Naive thymus-derived CD8-positive, alpha-beta T cell (primary cell): ENCODE measurements at regions of chrX and their contacts with region 1.

Region 1: DNA sequence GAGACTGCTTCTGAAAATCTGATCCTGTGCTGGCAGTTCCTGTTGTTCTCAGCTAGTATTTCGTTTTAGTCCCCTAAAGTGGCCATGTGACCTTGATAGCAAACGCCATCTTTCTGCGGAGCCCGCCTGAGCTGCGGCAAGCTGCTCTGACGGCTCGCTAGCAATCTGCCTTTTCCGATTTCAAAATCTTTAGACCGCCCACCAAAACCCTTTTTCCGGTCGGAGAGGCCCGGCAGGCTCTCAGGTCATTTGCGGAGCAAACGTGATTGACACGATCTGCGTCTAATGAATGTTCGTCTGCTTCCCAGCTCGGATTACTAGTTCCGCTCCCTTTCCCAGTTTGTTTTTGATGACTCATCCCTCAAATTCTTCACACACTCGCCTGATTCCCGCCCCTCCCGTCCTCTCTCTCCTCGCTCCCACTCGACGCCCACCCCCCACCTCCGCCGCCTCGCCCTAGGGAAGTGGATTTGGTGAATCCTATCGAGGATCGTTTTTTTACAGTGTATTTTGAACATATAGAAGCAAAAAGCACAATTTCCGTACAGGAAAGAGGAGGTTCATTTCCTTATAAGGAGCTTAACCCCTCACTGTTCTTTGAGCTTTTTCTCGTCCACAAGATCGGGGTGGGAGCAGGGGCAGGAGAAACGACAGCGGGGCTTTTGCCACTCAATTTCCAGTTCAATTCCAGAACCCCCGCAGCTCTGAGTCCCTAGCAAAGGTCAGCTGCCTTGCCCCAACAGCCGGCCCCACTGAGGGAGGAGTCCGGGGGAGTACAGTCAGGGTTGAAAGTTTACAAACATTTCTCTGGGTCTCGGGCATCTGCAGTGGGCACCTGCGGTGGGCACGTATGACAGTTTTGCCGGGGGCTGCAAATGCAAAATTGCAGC is 37.5 kb downstream of the NLGN3 start:
- DNase-seq: peak; percentile 54 to 89 (median 80)
- ATAC-seq: peak; percentile 94 to 95
- H3K4me3 Mint-ChIP-seq: peak overlapping the region; percentile 88 to 98 (median 94)
- H3K27ac Mint-ChIP-seq: peak overlapping the region; percentile 90 to 100 (median 99)
- H3K4me1 Mint-ChIP-seq: peaks cover 0 to 21% (median 14%) of the 10 kb centered on the region in 4 donors
- H3K27me3 Mint-ChIP-seq: no peaks in the 10 kb centered on the region

Region 2: GRCh38 chrX:71118032-71118984 is 63.8 kb before region 1 on chrX and contains the start of gene MED12:
- POLR2A ChIA-PET with region 1: interaction called, 10 read pairs
- DNase-seq: peak; percentile 69 to 88 (median 78)
- ATAC-seq: peak; percentile 94 to 96
- H3K4me3 Mint-ChIP-seq: peak within 1 kb of the TSS; percentile 82 to 94 (median 87)
- H3K27ac Mint-ChIP-seq: peak within 1 kb of the TSS; percentile 88 to 97 (median 94)
- H3K4me1 Mint-ChIP-seq: peaks cover 7 to 37% (median 30%) of the 10 kb centered on the region in 4 donors
- H3K27me3 Mint-ChIP-seq: no peaks in the 10 kb centered on the region
- polyA plus RNA-seq, gene MED12: 6.6 to 17.0 (median 10.2) TPM

Region 3: DNA sequence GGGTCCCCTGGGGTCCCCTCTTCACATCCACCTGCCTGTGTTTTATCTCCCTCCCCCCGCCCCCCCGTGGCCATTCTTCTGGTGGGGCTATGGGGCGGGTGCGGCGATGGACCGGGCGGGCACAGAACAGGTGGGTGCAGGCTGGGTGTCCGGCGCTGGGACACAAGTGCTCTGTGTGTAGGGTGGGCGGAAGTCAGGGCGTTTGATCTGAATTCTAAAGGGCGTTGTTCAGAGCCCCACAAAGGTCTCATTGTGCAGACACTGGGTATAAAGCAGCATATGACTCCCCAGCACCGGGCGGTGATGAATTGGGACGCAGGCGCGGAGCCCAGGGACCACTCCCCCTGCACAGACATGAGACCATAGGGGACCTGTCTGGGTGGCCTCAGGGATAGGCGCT is 40.8 kb after region 1 on chrX and contains the start of gene GJB1:
- POLR2A ChIA-PET with region 1: no interaction called
- DNase-seq: no peak
- ATAC-seq: no peak
- H3K4me3 Mint-ChIP-seq: peak within 1 kb of the TSS in 1 of 10 donors; percentile 34
- H3K27ac Mint-ChIP-seq: peak within 1 kb of the TSS in 1 of 10 donors; percentile 15
- H3K4me1 Mint-ChIP-seq: peaks cover 0 to 2% (median 0%) of the 10 kb centered on the region in 4 donors
- H3K27me3 Mint-ChIP-seq: no peaks in the 10 kb centered on the region
- polyA plus RNA-seq, gene GJB1: not detected

Region 4: GRCh38 chrX:71254092-71254941 is 72.2 kb after region 1 on chrX and contains the start of gene ZMYM3:
- POLR2A ChIA-PET with region 1: interaction called, 34 read pairs
- DNase-seq: peak; percentile 68 to 93 (median 84)
- ATAC-seq: peak; percentile 82 to 84
- H3K4me3 Mint-ChIP-seq: peak within 1 kb of the TSS; percentile 84 to 98 (median 93)
- H3K27ac Mint-ChIP-seq: peak within 1 kb of the TSS; percentile 89 to 98 (median 97)
- H3K4me1 Mint-ChIP-seq: peaks cover 13 to 32% (median 23%) of the 10 kb centered on the region in 4 donors
- H3K27me3 Mint-ChIP-seq: no peaks in the 10 kb centered on the region
- polyA plus RNA-seq, gene ZMYM3: 4.8 to 6.5 (median 5.0) TPM

Region 5: GRCh38 chrX:71365876-71366673 is 183.9 kb after region 1 on chrX and contains the start of gene TAF1:
- POLR2A ChIA-PET with region 1: interaction called, 33 read pairs
- DNase-seq: peak; percentile 74 to 97 (median 90)
- ATAC-seq: peak; percentile 89 to 91
- H3K4me3 Mint-ChIP-seq: peak within 1 kb of the TSS; percentile 90 to 99 (median 98)
- H3K27ac Mint-ChIP-seq: peak within 1 kb of the TSS; percentile 95 to 100 (median 99)
- H3K4me1 Mint-ChIP-seq: peaks cover 17 to 32% (median 26%) of the 10 kb centered on the region in 4 donors
- H3K27me3 Mint-ChIP-seq: no peaks in the 10 kb centered on the region
- polyA plus RNA-seq, gene TAF1: 4.3 to 10.2 (median 9.9) TPM